Prostate gland (tissue), 2 donors: ENCODE measurements at regions of chr17 and their contacts with region 1.

Region 1: DNA sequence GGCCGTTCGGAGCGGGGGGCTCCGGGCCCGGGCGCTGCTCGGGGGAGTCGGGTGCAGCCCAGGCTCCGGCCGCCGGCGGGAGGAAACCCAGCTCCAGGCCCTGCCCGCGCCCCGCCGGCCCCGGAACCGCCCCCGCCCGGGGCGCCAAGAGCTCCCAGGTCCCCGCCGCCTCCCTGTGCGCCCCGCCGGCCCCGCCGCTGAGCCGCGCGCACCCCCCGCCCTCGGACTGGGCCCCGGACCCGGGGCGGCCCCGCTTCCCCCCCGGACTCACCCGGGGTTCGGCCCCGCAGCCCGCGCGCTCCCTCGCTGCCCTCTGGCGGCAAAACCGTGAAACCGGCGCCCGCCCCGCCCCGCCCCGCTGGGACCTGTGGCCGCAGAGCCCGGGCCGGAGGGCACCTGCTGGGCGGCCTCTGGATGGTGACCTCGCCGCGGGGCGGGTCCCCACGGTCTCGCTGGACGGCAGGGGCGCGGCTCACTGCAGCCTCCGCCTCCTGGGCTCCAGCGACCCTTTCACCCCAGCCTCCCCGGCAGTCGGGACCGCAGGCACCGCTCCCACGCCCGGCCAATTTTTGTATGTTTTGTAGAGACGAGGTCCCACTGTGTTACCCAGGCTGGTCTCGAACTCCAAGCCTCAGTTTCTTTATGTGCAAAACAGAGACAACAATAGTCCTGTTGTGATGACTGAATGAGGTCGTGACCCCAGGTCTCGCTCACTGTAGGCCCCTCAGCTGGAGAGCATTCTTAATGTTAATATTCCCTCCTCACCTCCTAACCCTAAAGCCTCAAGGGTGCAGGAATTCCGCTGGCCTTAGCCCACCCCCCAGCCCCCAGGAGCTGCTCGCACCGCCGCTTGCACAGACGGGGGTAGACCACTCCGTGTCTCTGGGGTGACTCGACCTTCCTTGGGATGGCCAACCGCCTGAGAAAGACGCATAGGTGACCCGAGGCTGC is 33.6 kb upstream of the RPH3AL start:
- DNase-seq: peak; percentile 53
- H3K4me3 ChIP-seq: peak overlapping the region; percentile 49 to 68
- H3K27ac ChIP-seq: peak overlapping the region; percentile 42 to 74
- H3K4me1 ChIP-seq: no peaks in the 10 kb centered on the region
- H3K27me3 ChIP-seq: no peaks in the 10 kb centered on the region
- CTCF ChIP-seq: peak; percentile 58 to 91 (median 89)
- POLR2A ChIP-seq: no peak

Region 2: DNA sequence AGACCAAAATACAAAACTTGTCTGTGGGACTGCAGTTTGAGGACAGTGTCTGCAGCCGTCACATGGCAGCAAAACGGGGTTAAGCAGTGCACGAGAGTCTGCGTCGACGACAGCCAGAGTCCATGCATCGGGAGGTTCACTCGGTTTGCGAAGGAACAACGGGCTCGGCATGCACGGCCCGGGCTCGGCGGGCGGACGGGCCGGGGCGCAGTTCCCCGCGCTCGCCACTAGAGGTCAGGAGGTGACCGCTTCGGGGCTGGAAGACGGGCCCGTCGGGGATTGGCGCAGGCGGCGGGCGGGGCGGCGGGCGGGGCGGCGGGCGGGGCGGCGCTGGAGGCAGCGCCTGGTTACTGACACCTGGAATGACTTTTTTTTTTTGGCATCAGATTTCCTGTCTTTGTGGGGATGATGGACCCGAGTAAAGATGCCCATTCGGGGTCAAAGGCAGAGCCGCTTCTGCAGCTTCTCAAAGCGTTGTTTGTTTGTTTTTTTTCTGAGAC is 242.4 kb before region 1 on chr17:
- intact Hi-C with region 1: loop called (anchors 5 kb)
- DNase-seq: peak; percentile 70
- H3K4me3 ChIP-seq: no peak overlapping the region
- H3K27ac ChIP-seq: no peak overlapping the region
- H3K4me1 ChIP-seq: no peaks in the 10 kb centered on the region
- H3K27me3 ChIP-seq: no peaks in the 10 kb centered on the region
- CTCF ChIP-seq: peak; percentile 81 to 94 (median 88)
- POLR2A ChIP-seq: no peak

Region 3: GRCh38 chr17:320809-321653 is 65.2 kb before region 1 on chr17:
- intact Hi-C with region 1: no loop called
- DNase-seq: no peak
- H3K4me3 ChIP-seq: no peak overlapping the region
- H3K27ac ChIP-seq: no peak overlapping the region
- H3K4me1 ChIP-seq: no peaks in the 10 kb centered on the region
- H3K27me3 ChIP-seq: no peaks in the 10 kb centered on the region
- CTCF ChIP-seq: no peak
- POLR2A ChIP-seq: no peak

Region 4: GRCh38 chr17:418421-418751 is 32.2 kb after region 1 on chr17:
- intact Hi-C with region 1: no loop called
- DNase-seq: no peak
- H3K4me3 ChIP-seq: no peak overlapping the region
- H3K27ac ChIP-seq: no peak overlapping the region
- H3K4me1 ChIP-seq: no peaks in the 10 kb centered on the region
- H3K27me3 ChIP-seq: no peaks in the 10 kb centered on the region
- CTCF ChIP-seq: no peak
- POLR2A ChIP-seq: no peak